ENCODE measurements at regions of chr6 and their contacts with region 1.

Region 1: GRCh38 chr6:118800394-118801071 is 93.4 kb upstream of the ASF1A start:
- DNase-seq: peak; percentile 50
- H3K4me3 ChIP-seq: no peak overlapping the region; the same call in 1 of the 2 replicates
- CTCF ChIP-seq: peak; percentile 80

Region 2: GRCh38 chr6:118565311-118565960 is 235.1 kb before region 1 on chr6:
- CTCF ChIA-PET with region 1: interaction called, 10 read pairs
- POLR2A ChIA-PET with region 1: no interaction called
- DNase-seq: no peak
- H3K4me3 ChIP-seq: no peak overlapping the region
- CTCF ChIP-seq: peak; percentile 22

Region 3: DNA sequence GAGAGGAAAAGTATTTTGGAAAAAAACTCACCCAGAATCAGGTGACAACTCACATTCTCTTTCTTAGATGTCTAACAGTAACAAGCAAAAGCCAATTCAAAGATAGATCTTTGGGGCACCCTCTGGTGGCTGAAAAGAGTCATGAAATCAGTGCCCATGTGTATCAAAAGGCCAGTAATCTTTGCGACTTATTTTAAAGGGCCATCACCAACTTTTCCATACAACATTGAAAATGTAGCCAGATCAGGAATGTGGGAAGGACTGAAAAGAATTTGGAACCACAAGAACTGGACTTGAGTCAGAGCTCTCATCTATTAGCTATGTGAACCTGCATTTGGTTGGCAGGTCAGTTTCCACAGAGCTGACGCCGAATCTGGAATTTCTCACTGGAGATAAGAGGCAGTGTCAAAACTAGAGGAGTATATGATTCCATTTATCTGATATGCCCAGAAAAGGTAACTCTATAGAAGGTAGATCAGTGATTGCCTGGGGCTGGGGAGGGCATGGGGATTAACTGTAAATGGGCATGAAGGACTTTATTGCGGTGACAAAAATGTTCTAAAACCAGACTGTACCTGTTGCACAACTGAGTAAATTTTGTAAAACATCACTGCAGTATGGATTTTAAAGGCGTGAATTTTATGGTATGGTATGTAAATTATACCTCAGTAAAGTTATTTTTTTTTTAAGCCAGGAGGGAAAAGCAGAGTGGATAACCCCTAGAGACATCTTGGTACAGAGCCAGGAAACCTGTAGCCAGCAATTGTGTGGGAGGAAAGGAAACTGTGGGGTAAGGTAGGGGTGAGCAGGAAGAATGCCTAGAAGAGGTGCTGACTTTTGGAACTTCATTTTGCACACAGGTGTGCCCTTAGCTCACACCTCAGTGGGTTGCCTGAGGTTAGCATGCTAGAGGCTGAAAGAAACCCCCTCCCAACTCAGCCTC is 23.7 kb before region 1 on chr6:
- CTCF ChIA-PET with region 1: interaction called, 15 read pairs
- POLR2A ChIA-PET with region 1: no interaction called
- DNase-seq: peak; percentile 33
- H3K4me3 ChIP-seq: no peak overlapping the region
- CTCF ChIP-seq: peak; percentile 66

Region 4: DNA sequence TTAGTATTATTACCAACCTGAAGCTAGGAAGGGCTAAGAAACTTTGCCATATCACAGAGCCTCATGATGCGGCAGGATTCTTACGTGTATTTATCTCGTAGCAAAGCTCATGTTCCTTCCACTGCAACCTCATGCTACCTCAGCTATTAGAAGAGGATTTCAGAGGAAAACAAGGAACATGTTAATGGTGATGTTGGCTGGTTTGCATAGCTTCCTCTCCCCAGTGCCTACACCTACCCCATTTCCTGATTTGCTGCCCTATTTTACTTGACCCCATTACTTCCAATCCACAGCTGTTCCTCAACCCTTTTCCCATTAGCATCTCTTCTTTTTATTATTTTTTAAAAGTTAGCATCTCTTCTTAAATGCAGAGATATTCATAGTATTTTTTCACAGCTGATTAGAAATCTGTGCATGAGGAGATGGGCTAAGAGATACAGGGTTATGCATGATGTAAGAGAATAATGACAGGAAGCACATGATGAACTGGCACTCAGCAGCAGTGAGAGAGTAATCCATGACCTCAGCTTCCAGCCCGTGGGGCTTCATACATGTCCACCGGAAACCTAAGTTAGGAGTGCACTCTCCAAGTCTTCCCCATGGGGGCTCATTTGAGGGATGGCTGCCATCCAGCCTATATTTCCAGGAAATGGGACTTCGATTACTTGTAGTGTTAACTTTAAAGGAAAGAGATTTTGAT is 12.7 kb before region 1 on chr6:
- CTCF ChIA-PET with region 1: interaction called, 85 read pairs
- POLR2A ChIA-PET with region 1: no interaction called
- DNase-seq: no peak
- H3K4me3 ChIP-seq: no peak overlapping the region
- CTCF ChIP-seq: no peak

Measured in AG04449 (cell line).